Left ventricle myocardium inferior (tissue), 1 donor: ENCODE measurements at regions of chr1 and their contacts with region 1.

Region 1: GRCh38 chr1:235415008-235415904 is 48.0 kb downstream of the TBCE start:
- DNase-seq: peak; percentile 42
- H3K4me3 ChIP-seq: no peak overlapping the region
- H3K27ac ChIP-seq: no peak overlapping the region
- H3K4me1 ChIP-seq: peaks cover 7% of the 10 kb centered on the region
- H3K27me3 ChIP-seq: no peaks in the 10 kb centered on the region
- CTCF ChIP-seq: peak; percentile 83

Region 2: DNA sequence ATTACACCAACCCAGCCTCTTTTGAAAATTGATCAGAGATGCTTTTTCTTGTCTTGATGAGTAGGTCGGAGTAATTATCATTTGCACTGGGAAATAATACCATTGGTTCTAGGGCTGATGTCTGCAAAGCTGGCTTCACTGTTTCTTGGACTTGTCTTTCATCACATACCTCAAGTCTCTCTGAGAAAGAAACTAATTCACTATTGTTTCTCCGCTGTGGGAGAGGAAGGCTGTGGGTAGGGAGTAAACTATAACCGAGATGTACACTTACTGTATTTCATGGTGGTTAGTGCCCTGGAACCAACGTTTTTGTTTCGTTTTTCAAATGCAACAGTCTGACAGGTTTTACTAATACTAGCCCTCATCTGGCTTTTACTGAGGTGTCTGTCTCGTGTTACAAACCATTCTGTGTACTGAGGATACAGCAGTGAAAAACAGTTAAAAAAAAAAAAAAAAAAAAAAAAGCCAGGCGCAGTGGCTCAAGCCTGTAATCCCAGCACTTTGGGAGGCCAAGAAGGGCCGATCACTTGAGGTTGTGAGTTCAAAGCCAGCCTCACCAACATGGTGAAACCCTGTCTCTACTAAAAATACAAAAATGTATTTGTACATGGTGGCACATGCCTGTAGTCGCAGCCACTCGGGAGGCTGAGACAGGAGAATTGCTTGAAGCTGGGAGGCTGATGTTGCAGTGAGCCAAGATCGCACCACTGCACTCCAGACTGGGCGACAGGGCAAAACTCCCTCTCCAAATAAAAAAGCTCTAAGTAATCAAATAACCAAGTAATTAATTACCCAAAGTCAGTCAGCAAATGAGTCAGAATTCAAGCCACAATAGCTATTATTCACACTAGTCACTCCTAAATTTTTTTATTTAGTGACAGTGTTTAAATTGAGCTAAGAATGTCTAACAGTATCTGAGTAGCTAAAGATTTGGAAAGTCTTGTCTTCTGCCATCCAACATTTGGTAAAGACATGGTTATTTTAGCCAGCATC is 309.9 kb before region 1 on chr1:
- intact Hi-C with region 1: loop called (anchors 10 kb)
- DNase-seq: no peak
- H3K4me3 ChIP-seq: no peak overlapping the region
- H3K27ac ChIP-seq: no peak overlapping the region
- H3K4me1 ChIP-seq: peaks cover 8% of the 10 kb centered on the region
- H3K27me3 ChIP-seq: no peaks in the 10 kb centered on the region
- CTCF ChIP-seq: no peak